Activated CD4-positive, alpha-beta memory T cell treated with anti-CD3 and anti-CD28 coated beads for 36 hours (primary cell): ENCODE measurements at regions of chr9 and their contacts with region 1.

Region 1: DNA sequence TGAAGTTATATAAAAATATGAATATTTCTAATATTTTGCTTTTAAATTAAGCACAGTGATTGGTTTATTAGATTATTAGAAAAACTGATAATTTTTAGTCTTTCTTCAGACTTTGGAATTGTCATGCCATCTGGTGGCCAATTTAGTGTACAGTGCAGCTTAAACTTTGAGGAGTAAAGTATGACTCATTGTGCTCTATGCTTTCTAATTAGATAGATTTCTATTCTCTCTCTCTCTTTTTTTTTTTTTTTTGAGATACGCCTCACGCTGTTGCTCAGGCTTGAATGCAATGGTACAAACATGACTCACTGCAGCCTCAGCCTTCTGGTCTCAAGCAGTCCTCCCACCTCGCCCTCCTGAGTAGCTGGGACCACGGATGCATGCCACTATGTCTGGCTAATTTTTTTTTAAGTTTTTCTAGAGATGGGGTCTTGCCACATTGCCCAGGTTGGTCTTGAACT is 42.1 kb upstream of the GPR21 start:
- DNase-seq: peak; percentile 62
- H3K4me3 Mint-ChIP-seq: no peak overlapping the region
- H3K27ac Mint-ChIP-seq: no peak overlapping the region
- H3K4me1 Mint-ChIP-seq: peaks cover 8% of the 10 kb centered on the region
- H3K27me3 Mint-ChIP-seq: no peaks in the 10 kb centered on the region

Region 2: GRCh38 chr9:122464633-122465567 is 526.5 kb before region 1 on chr9:
- CTCF ChIA-PET with region 1: no interaction called
- POLR2A ChIA-PET with region 1: no interaction called
- intact Hi-C with region 1: loop called (anchors 1 kb)
- DNase-seq: peak; percentile 75
- H3K4me3 Mint-ChIP-seq: peak overlapping the region; percentile 73
- H3K27ac Mint-ChIP-seq: peak overlapping the region; percentile 39
- H3K4me1 Mint-ChIP-seq: peaks cover 10% of the 10 kb centered on the region
- H3K27me3 Mint-ChIP-seq: peaks cover 25% of the 10 kb centered on the region

Region 3: DNA sequence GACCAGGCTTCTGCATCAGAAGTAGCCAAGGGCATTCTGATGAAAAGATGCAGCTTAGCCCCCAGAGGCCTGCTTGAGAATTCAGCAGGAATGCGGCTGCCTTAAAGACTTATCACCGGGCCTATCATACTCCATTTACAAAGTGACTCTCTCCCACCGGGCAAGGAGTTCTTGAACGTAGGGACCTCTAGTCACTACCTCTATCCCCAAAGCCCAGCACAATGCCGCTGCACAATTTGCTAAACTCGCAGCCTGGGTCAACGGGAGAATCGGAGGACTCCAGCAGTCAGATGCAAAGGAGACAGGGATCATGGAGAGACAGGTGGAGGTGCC is 163.7 kb before region 1 on chr9:
- CTCF ChIA-PET with region 1: no interaction called
- POLR2A ChIA-PET with region 1: no interaction called
- intact Hi-C with region 1: loop called (anchors 5 kb)
- DNase-seq: no peak
- H3K4me3 Mint-ChIP-seq: peak overlapping the region; percentile 97
- H3K27ac Mint-ChIP-seq: peak overlapping the region; percentile 81
- H3K4me1 Mint-ChIP-seq: peaks cover 34% of the 10 kb centered on the region
- H3K27me3 Mint-ChIP-seq: no peaks in the 10 kb centered on the region

Region 4: DNA sequence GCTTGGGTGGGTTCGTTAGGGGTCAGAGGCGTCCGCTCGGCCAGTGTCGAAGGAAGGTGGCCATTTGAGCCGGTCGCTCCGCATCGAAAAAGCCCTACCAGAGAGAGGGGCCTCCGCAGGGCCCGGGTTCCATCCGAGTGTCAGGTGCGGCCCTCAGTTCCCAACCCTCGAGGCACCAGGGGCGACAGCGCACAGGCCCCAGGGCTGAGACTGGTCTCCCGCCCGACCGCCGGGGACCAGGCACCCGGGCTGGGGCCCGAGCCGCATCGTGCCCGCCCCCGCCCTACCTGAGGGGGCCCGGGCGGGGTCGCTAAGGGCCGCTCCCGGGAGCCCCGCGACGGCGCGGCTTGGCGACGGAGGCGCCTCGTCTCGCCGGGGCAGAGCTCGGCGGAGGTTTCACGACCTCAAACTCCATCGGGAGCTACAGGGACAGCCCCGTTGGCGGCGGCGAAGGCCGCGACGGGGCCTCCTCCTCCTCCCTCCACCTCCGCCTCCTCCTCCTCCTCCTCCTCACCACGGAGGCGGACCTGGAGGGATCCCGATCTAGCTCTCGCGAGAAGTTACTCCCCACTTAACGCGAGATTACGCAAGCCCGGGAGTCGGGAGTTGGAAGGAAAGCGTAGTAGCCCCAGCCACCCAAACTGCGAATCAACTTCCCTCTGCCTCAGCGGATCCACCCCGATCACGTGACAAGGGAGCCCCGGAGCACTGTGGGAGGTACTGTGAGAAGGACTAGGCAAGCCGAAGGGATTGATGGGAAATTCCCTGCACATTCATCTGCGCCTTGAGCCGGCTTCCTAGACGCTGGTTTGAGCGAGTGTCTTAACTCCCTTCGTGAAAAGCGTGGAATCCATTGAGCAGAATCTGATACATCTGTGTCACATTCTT is 86.3 kb before region 1 on chr9 and contains the start of gene RC3H2:
- CTCF ChIA-PET with region 1: interaction called, 5 read pairs
- POLR2A ChIA-PET with region 1: no interaction called
- intact Hi-C with region 1: loop called (anchors 2 kb)
- DNase-seq: peak; percentile 98
- H3K4me3 Mint-ChIP-seq: peak within 1 kb of the TSS; percentile 94
- H3K27ac Mint-ChIP-seq: peak within 1 kb of the TSS; percentile 93
- H3K4me1 Mint-ChIP-seq: peaks cover 20% of the 10 kb centered on the region
- H3K27me3 Mint-ChIP-seq: no peaks in the 10 kb centered on the region
- total RNA-seq, gene RC3H2: 27.7 to 27.8 TPM

Region 5: GRCh38 chr9:122912964-122913673 is 78.3 kb before region 1 on chr9 and contains the start of gene ZBTB6:
- CTCF ChIA-PET with region 1: interaction called, 7 read pairs
- POLR2A ChIA-PET with region 1: no interaction called
- intact Hi-C with region 1: loop called (anchors 1 kb)
- DNase-seq: peak; percentile 86
- H3K4me3 Mint-ChIP-seq: peak within 1 kb of the TSS; percentile 94
- H3K27ac Mint-ChIP-seq: peak within 1 kb of the TSS; percentile 100
- H3K4me1 Mint-ChIP-seq: peaks cover 35% of the 10 kb centered on the region
- H3K27me3 Mint-ChIP-seq: no peaks in the 10 kb centered on the region
- total RNA-seq, gene ZBTB6: 9.9 to 10.6 TPM

Region 6: DNA sequence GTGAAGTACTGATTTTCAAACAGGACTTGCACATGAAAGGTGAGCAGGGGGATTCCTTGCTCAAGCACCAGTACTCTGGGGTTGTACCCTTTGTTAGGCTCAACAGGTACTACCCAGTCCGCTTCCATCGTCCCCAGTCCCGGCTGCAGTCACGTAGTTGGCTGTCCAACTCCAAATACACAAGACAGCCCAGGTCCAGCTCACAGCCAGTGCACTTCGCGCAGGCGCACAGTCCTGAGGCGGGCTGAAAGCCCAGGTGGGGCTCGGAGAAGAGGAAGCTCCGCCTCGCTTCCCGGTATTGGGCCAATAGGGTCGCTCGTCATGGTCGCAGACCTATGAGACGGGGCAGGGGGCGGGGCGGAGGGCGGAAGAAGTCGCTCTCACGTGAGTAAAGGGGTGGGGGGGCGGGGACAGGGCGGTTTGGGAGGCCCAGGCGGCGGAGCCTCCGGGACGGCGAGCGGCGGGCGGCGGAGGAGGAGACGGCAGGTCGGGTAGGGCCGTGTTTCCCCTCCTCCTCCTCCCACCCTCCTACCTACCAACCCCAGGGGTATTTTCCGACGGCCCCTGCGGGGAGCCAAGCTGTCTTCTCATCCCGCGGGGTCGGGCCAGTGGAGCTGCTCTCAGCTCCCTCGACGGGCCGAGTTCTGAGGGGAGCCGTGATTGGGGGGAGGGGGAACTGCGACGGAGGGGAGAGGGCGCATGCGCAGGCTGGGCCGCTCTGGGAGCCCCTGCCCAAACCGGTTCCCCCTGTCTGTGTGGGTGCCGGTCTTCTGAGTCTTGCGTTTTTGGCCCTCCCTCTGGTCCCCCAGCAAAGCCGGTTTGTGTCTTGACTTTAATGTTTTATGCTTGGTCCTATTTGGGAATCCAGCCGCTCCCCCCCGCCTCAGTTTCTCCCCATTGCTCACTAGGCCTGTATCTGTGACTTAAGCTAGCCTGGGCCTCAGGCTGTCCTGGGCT is 50.5 kb before region 1 on chr9 and contains the start of gene RABGAP1:
- CTCF ChIA-PET with region 1: no interaction called
- POLR2A ChIA-PET with region 1: interaction called, 3 read pairs
- intact Hi-C with region 1: loop called (anchors 2 kb)
- DNase-seq: peak; percentile 99
- H3K4me3 Mint-ChIP-seq: peak within 1 kb of the TSS; percentile 94
- H3K27ac Mint-ChIP-seq: peak within 1 kb of the TSS; percentile 84
- H3K4me1 Mint-ChIP-seq: peaks cover 35% of the 10 kb centered on the region
- H3K27me3 Mint-ChIP-seq: no peaks in the 10 kb centered on the region
- total RNA-seq, gene RABGAP1: 27.1 to 28.8 TPM

Region 7: GRCh38 chr9:122946461-122947003 is 44.9 kb before region 1 on chr9:
- CTCF ChIA-PET with region 1: no interaction called
- POLR2A ChIA-PET with region 1: interaction called, 5 read pairs
- intact Hi-C with region 1: loop called (anchors 1 kb)
- DNase-seq: no peak
- H3K4me3 Mint-ChIP-seq: no peak overlapping the region
- H3K27ac Mint-ChIP-seq: no peak overlapping the region
- H3K4me1 Mint-ChIP-seq: peaks cover 63% of the 10 kb centered on the region
- H3K27me3 Mint-ChIP-seq: no peaks in the 10 kb centered on the region